Activated B cell treated with CpG ODN at 0.5 μM for 24 hours (primary cell): ENCODE measurements at regions of chr3 and their contacts with region 1.

Region 1: GRCh38 chr3:104367000-104367399 is 999.7 kb upstream of the ALCAM start:
- DNase-seq: no peak
- ATAC-seq: no peak
- H3K4me3 Mint-ChIP-seq: no peak overlapping the region
- H3K27ac Mint-ChIP-seq: no peak overlapping the region
- H3K4me1 Mint-ChIP-seq: no peaks in the 10 kb centered on the region
- H3K27me3 Mint-ChIP-seq: no peaks in the 10 kb centered on the region
- CTCF ChIP-seq: no peak

Region 2: GRCh38 chr3:104411757-104412156 is 44.8 kb after region 1 on chr3:
- CTCF ChIA-PET with region 1: no interaction called
- POLR2A ChIA-PET with region 1: no interaction called
- intact Hi-C with region 1: loop called (anchors 5 kb)
- DNase-seq: no peak
- ATAC-seq: no peak
- H3K4me3 Mint-ChIP-seq: no peak overlapping the region
- H3K27ac Mint-ChIP-seq: no peak overlapping the region
- H3K4me1 Mint-ChIP-seq: no peaks in the 10 kb centered on the region
- H3K27me3 Mint-ChIP-seq: no peaks in the 10 kb centered on the region
- CTCF ChIP-seq: no peak